Aorta (tissue), 5 donors: ENCODE measurements at regions of chr18 and their contacts with region 1.

Region 1: DNA sequence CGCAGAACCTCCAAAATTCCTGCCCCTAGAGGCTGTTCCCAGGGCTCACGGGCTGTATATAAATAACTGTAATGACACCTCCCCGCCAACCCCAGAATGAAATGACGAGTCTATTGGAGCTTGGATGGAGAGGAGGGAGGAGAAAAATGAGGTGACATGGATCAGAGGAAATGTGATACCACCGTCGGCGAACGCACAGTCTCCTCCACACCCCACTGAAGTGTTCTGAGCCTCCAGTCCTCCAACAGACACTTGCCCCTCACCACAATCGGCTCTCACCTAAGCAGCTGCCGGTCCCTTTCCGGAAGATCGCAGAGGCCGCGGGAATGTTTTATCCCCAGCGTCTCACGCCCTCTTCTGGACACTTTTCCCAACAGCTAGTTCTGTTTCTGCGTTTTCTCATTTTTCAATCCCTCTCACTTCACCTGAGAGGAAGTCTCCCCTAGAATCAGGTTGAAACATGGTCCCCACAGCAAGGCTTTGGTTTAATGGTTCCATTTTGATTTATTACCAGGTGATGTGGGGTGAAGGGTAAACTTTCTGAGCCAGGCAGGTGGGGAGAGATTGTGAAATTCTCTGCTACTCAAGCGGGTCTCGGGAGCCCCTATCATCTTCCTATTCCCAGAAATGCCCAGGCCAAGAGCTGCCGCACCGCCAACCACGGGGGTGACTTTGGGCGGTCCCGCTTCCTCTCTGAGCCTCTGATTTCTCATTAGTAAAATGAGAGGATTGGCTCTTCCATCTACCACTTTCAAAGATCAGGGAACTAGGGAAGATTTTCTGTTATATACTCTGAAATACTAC is 9.1 kb upstream of the MYO5B start:
- DNase-seq: peak in 1 of 2 donors; percentile 46
- ATAC-seq: no peak
- H3K4me3 ChIP-seq: peak overlapping the region in 1 of 2 donors; percentile 50
- H3K27ac ChIP-seq: no peak overlapping the region
- H3K4me1 ChIP-seq: peaks cover 0 to 3% of the 10 kb centered on the region in 2 donors
- H3K27me3 ChIP-seq: no peaks in the 10 kb centered on the region

Region 2: GRCh38 chr18:49628881-49629795 is 574.9 kb before region 1 on chr18:
- intact Hi-C with region 1: no loop called
- DNase-seq: peak in 1 of 2 donors; percentile 58
- ATAC-seq: no peak
- H3K4me3 ChIP-seq: no peak overlapping the region
- H3K27ac ChIP-seq: no peak overlapping the region
- H3K4me1 ChIP-seq: no peaks in the 10 kb centered on the region
- H3K27me3 ChIP-seq: no peaks in the 10 kb centered on the region

Region 3: DNA sequence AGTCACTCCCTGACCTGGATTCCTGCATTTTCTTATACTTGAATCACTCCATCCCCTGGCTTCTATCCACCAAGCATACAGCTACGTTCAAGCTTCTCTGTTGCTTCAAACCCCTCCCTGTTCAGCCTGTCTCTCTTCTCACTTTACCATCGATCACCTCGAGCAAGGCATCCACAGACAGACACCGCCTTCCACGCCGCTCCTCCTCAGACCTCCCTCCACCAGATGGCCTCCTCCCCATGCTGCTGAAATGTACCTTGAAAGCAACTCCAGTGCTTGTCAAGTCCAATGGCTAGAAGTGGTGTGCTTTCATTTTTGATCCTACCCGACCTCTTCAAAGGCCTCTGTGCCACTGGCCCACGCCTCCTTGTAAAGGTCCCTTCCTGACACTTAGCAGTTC is 259.3 kb before region 1 on chr18:
- intact Hi-C with region 1: loop called in 1 of 2 experiments (anchors 5 kb)
- DNase-seq: no peak
- ATAC-seq: no peak
- H3K4me3 ChIP-seq: no peak overlapping the region
- H3K27ac ChIP-seq: no peak overlapping the region
- H3K4me1 ChIP-seq: no peaks in the 10 kb centered on the region
- H3K27me3 ChIP-seq: no peaks in the 10 kb centered on the region

Region 4: DNA sequence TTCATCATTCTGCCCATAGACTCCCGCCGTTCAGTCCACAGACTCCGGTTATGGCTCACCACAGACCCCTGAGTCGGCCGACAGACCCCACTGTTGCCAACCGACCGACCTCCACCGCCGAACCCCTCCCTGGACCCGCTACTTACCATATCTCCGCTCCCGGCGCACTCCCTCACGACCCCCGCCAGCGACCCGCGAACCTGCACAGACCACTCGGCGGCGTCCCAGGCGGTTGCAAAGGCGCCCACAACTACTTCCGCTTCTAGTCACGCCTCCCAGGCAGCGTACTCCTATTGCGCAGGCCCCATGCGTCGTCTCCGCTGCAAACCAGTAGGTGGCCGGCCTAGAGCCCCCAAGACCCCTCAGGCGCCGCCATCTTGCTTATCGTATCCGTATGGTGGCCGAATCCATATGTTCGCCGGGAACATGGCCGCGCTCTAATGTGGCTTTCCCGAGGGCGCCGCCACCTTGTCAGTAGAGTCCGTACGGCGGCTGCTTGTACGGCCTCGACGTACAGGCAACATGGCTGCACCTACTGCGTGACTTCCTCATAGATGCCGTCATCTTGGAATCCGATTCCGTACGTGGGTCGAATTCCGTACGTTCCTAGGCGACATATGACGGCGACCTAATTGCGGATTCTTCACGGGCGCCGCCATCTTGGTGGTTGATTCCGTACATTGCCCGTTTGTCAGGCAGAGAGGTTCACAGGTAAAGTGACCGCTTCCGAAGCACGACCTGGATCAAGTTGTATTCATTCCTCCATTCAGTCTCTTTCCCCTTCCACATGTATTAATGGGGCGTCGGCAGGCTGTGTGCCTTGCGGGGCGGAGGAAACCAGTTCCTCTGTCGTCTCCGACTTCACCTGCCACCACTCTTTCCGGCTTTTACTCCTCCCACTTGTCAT is 83.7 kb after region 1 on chr18 and contains the start of gene CXXC1:
- intact Hi-C with region 1: no loop called
- DNase-seq: peak; percentile 98 to 99
- ATAC-seq: peak; percentile 96
- H3K4me3 ChIP-seq: peak within 1 kb of the TSS; percentile 57 to 78
- H3K27ac ChIP-seq: peak within 1 kb of the TSS in 1 of 2 donors; percentile 87
- H3K4me1 ChIP-seq: no peaks in the 10 kb centered on the region
- H3K27me3 ChIP-seq: no peaks in the 10 kb centered on the region
- total RNA-seq, gene CXXC1: 54.3 to 74.0 TPM

Region 5: DNA sequence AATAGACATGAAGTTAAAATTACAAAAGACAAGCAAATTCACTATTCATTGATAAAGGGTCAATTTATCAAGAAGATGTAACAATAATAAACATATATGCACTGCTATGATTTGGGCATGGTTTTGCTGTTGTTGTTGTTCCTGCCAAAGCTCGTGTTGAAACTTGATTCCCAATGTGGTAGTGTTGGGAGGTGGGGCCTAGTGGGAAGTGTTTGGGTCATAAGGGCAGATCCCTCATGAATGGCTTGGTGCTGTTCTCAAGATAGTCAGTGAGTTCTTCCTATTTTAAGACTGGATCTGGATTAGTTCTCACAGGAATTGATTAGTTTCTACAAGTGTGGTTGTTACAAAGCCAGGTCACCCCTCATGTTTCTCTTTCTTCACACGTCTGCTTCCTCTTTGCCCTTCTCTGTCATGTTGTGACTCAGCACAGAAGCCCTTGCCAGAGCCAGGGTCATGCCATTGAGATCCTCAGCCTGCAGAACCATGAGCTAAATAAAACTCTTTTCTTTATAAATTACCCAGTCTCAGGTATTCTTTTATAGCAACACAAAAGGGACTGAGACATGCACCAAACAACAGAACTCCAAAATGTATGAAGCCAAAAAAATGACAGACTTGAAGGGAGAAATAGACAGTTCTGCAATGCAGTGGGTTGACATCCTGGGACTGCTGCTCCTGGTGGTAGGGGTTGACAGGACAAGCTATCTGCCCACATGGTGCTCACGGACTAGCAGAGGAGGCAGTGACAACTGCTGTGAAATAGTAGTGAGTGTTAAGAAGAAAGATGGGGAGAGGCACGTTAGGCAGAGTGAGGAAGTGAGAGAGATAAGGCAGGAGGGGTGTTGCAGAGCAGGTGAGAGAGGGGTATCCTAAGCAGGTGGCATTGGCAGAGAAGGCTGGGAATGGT is 152.3 kb after region 1 on chr18:
- intact Hi-C with region 1: loop called in 1 of 2 experiments (anchors 10 kb)
- DNase-seq: no peak
- ATAC-seq: no peak
- H3K4me3 ChIP-seq: no peak overlapping the region
- H3K27ac ChIP-seq: no peak overlapping the region
- H3K4me1 ChIP-seq: no peaks in the 10 kb centered on the region
- H3K27me3 ChIP-seq: no peaks in the 10 kb centered on the region

Region 6: DNA sequence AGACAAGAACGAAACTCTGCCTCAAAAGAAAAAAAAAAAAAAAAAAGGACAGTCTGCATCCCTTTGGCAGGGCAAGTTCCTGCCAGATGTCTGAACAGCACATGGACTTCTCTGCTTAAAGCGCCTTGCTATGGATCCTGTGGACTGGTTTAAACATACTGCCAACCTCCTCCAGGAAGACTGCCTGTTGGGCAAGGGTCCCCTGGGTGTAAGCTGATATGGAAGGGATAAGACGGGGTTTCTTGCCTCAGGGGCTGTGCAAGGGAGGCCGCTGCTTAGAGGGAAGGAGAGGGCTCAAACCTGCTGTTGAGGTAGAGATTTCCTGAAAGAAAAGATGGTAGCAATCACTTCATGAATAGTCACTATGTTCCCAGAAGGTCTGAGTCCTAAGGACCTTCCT is 193.0 kb after region 1 on chr18:
- intact Hi-C with region 1: no loop called
- DNase-seq: no peak
- ATAC-seq: no peak
- H3K4me3 ChIP-seq: no peak overlapping the region
- H3K27ac ChIP-seq: no peak overlapping the region
- H3K4me1 ChIP-seq: no peaks in the 10 kb centered on the region
- H3K27me3 ChIP-seq: no peaks in the 10 kb centered on the region